ENCODE measurements at regions of chr11 and their contacts with region 1.

Region 1: DNA sequence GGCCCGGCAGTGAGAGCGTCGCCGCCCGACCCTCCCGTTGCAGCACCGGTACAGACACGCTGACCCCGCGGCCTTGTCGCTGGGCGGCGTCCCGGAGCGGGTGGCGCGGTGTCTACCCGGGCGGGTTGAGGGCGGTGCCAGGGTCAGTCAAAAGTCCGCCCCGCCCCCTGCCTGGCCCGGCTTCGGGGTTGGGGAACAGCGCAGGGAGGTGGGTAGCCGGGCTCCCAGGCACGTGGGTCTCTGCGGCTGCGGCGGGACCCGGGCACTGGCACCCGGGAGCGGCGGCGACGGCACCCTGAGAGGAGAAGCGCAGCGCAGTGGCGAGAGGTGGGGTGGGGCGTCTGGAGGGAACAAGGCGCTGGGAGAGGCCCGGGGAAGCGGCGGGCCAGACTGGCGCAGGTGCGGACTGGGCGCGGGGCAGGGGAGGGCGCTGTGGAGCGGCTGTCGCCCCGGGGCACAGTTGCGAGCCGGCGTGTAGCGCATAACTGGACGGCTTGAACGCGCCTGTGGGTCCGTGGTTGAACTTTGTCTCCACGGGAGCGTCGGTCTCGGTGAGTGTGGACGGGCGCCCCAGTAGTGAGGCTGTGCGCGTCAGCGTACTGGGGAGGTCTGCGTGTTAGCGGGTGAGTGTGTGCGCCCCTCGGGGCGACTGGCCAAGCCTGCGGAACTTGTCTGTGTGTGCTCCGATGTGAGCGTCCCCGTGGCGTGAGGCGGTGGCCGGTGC is at the start of gene P2RY2:
- DNase-seq: peak; percentile 72 to 82
- ATAC-seq: peak; percentile 90 to 94
- H3K4me3 ChIP-seq: peak within 1 kb of the TSS; percentile 43
- H3K27ac ChIP-seq: peak within 1 kb of the TSS; percentile 68 to 91
- H3K4me1 ChIP-seq: peaks cover 16% of the 10 kb centered on the region
- CTCF ChIP-seq: peak; percentile 74
- EP300 ChIP-seq: no peak
- POLR2A ChIP-seq: peak; percentile 79
- RAD21 ChIP-seq: peak in 1 of 2 experiments; percentile 31; a peak in 3 of 5 replicates
- polyA plus RNA-seq, gene P2RY2: 3.7 and 5.2 TPM in 2 replicates

Region 2: DNA sequence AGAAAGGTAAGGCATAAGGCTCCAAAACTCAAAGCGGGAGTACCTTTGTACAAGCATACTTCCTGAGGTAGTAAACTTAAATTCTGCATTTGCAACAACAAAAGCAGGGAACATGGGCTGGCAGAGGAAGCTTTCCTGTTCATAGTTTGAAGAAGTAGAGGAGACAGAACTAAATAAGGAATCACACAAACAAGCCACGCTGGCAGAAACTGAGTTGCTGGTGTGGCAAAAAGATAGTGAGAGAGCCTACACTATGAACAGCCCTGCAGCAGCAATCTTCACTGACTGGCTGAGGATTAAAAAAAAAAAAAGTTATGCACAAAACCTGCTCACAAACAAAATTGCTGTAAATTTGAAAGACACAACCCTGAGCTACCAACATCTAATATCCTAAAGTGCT is 122.7 kb before region 1 on chr11:
- CTCF ChIA-PET with region 1: no interaction called
- POLR2A ChIA-PET with region 1: no interaction called
- DNase-seq: no peak
- ATAC-seq: no peak
- H3K4me3 ChIP-seq: no peak overlapping the region
- H3K27ac ChIP-seq: no peak overlapping the region
- H3K4me1 ChIP-seq: no peaks in the 10 kb centered on the region
- CTCF ChIP-seq: no peak
- EP300 ChIP-seq: no peak
- POLR2A ChIP-seq: no peak
- RAD21 ChIP-seq: no peak

Region 3: GRCh38 chr11:73205661-73206343 is 12.5 kb before region 1 on chr11:
- CTCF ChIA-PET with region 1: interaction called, 10 read pairs
- POLR2A ChIA-PET with region 1: no interaction called
- DNase-seq: no peak
- ATAC-seq: peak; percentile 34 to 49; a peak in 3 of 6 replicates
- H3K4me3 ChIP-seq: no peak overlapping the region
- H3K27ac ChIP-seq: peak overlapping the region in 1 of 2 experiments; percentile 59; a peak in 2 of 6 replicates
- H3K4me1 ChIP-seq: peaks cover 27% of the 10 kb centered on the region
- CTCF ChIP-seq: no peak
- EP300 ChIP-seq: no peak
- POLR2A ChIP-seq: no peak
- RAD21 ChIP-seq: no peak

Region 4: GRCh38 chr11:73236854-73237253 is 18.6 kb after region 1 on chr11:
- CTCF ChIA-PET with region 1: interaction called, 39 read pairs
- POLR2A ChIA-PET with region 1: no interaction called
- DNase-seq: peak; percentile 63 to 69
- ATAC-seq: peak; percentile 46 to 80; a peak in 4 of 6 replicates
- H3K4me3 ChIP-seq: no peak overlapping the region
- H3K27ac ChIP-seq: no peak overlapping the region
- H3K4me1 ChIP-seq: peaks cover 13% of the 10 kb centered on the region; the same call in 2 of the 3 replicates
- CTCF ChIP-seq: peak; percentile 52
- EP300 ChIP-seq: no peak
- POLR2A ChIP-seq: no peak
- RAD21 ChIP-seq: peak; percentile 46 to 72